Right ventricle myocardium inferior (tissue), 1 donor: ENCODE measurements at regions of chr11 and their contacts with region 1.

Region 1: GRCh38 chr11:47552566-47553416 is at the start of gene CELF1:
- DNase-seq: peak; percentile 96
- ATAC-seq: peak; percentile 99
- total RNA-seq, gene CELF1: 96.2 TPM

Region 2: DNA sequence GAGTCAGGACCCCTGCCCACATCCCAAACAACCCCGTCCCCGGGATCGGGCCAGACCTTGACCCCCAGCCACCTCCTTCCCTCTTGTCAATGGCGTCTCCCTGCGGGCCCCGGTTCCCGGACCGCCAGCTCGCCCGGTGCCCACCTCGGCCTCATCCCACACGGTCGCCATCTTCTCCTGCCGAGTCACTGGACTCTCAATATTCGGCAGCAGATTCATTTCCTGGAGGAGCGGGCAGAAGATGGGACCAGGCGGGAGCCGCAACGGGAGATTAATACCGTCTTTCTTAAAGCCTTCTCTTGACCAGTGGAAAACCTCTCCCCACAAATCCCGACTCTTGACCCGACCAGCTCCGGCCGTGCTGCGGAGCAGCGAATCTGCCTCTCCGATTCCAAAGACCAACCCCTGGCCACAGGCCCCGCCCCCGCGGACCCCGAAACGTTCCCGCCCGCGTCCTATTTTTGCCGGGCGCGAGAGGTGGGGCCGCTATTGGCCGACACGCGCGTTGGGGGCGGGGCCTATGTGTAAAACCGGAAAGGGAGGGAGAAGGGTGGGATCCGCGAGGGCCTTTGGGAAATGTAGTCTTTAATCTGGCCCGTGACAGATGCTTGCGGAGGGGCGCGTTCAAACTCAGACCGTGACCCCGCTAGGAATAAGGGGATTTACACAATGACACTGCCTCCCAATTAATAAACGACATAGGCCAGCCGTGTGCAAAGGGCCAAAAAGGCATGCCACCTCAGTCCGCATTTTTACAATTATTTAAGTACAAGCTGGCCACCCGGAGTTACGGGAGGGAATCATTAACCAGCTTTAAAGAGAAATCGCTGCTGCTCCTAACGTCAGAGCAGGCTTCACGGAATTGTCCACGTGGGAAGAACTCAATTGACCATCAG is 126.5 kb before region 1 on chr11 and contains the start of gene PSMC3:
- intact Hi-C with region 1: loop called (anchors 2 kb)
- DNase-seq: peak; percentile 99
- ATAC-seq: peak; percentile 98
- total RNA-seq, gene PSMC3: 160 TPM

Region 3: GRCh38 chr11:47454180-47454644 is 98.6 kb before region 1 on chr11:
- intact Hi-C with region 1: no loop called
- DNase-seq: peak; percentile 80
- ATAC-seq: peak; percentile 89

Region 4: DNA sequence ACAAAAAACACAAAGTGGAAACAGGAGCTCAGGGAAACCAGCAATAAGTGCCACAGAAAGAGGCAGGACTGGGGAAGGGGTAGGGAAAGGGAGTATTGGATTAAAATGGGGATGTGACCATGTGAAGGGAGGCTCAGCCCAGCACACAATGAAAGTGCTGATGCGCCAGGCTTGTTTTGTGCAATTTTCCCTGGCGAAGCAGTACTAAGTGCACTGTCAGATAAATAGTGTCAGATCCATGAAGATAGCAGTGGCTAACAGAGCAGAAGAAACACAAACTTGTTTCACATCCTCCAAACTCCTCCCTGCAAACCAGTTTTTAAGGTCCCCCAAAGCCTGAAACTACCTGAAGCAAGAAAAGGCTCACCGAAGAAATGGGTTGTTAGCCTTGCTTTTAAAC is 53.2 kb before region 1 on chr11:
- intact Hi-C with region 1: loop called (anchors 5 kb)
- DNase-seq: no peak
- ATAC-seq: peak; percentile 68

Region 5: DNA sequence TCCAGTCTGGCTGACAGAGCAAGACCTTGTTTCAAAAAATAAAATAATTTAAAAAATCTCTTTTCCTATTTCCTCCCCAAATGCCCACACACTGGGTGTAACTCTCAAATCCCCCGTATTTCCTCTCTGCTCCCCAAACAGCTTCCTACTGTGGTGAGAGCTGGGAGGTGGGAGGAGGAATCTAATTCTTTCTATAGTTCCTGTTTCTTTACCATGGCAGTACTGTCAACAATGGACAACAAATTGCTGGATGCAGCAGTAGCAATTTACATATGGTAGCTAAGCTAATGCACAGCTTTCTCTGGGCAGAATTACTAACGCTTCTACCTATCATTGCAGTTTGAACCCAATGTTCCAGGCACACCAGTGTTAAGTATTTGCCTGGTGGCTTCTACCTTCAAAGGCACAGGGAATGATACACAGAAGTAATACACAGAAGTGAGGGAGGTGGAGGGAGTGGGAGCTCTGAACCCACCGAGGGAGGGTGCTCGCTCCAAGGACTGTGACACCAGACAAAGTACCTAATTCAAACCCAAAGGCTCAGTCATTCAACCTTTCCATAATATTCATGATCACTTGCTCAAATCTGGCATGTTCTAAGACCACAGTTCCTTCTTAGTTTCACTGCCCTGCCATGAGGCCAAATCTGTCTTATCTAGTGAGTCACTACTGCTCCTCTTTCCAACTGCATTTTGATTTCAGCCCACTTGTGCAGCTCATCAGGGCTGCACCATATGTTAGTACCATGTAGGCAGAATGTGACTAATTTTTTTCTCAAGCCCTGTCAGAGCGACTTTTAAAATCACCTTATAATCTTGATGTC is 37.8 kb before region 1 on chr11:
- intact Hi-C with region 1: loop called (anchors 5 kb)
- DNase-seq: no peak
- ATAC-seq: peak; percentile 73

Region 6: DNA sequence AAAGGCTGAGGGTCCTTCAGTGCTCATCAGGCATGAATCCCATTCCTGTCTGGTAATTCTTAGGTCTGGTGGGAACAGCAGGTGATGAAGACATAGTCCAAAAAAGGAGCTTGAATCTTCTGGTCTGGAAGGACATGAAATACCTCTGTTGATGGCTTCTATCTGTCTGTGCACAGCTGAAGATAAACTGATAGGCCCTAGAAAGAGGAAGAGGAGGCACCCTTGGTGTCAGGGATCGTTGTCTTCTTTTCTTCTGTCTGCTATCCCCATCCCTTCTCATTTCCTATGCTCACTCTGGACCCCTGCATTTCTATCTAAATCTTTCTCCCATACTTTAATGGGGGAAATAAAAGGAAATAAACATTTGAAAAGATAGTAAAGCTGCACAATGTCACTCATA is 152.9 kb after region 1 on chr11:
- intact Hi-C with region 1: no loop called
- DNase-seq: no peak
- ATAC-seq: no peak